PC-3 (cell line): ENCODE measurements at regions of chr18 and their contacts with region 1.

Region 1: GRCh38 chr18:68299906-68300305 is 415.0 kb downstream of the TMX3 start:
- DNase-seq: peak; percentile 90
- ATAC-seq: peak; percentile 100
- H3K4me3 ChIP-seq: no peak overlapping the region
- H3K27ac ChIP-seq: 0 out of 2 replicates have a peak overlapping the region, but pooled peaks have one; percentile 18
- H3K4me1 ChIP-seq: peaks cover 11% of the 10 kb centered on the region
- H3K27me3 ChIP-seq: no peaks in the 10 kb centered on the region
- CTCF ChIP-seq: no peak

Region 2: DNA sequence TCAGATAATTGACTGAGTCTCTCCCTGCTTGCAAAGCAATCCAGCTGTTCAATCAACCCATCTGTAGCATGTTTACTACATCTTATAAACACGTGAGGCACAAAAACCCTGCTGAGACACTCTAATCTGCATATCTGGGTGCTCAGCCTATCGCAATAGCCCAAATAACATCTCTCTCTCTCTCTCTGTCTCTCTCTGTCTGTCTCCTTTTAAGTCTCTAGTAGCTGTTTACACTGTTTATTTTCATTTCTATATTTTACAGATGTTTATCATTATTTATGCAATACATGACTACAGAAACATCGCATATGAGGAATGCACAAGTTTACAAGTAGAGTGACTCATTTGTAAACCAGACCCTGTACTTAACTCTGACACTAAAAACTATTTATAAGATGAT is 361.2 kb before region 1 on chr18:
- CTCF ChIA-PET with region 1: no interaction called
- POLR2A ChIA-PET with region 1: no interaction called
- intact Hi-C with region 1: no loop called
- DNase-seq: peak; percentile 15
- ATAC-seq: peak; percentile 57
- H3K4me3 ChIP-seq: no peak overlapping the region
- H3K27ac ChIP-seq: no peak overlapping the region
- H3K4me1 ChIP-seq: peaks cover 10% of the 10 kb centered on the region; the same call in 1 of the 2 replicates
- H3K27me3 ChIP-seq: no peaks in the 10 kb centered on the region
- CTCF ChIP-seq: no peak

Region 3: GRCh38 chr18:68233018-68233417 is 66.9 kb before region 1 on chr18:
- CTCF ChIA-PET with region 1: no interaction called
- POLR2A ChIA-PET with region 1: no interaction called
- intact Hi-C with region 1: no loop called
- DNase-seq: no peak
- ATAC-seq: no peak
- H3K4me3 ChIP-seq: no peak overlapping the region
- H3K27ac ChIP-seq: no peak overlapping the region
- H3K4me1 ChIP-seq: peaks cover 16% of the 10 kb centered on the region; the same call in 1 of the 2 replicates
- H3K27me3 ChIP-seq: no peaks in the 10 kb centered on the region
- CTCF ChIP-seq: no peak

Region 4: DNA sequence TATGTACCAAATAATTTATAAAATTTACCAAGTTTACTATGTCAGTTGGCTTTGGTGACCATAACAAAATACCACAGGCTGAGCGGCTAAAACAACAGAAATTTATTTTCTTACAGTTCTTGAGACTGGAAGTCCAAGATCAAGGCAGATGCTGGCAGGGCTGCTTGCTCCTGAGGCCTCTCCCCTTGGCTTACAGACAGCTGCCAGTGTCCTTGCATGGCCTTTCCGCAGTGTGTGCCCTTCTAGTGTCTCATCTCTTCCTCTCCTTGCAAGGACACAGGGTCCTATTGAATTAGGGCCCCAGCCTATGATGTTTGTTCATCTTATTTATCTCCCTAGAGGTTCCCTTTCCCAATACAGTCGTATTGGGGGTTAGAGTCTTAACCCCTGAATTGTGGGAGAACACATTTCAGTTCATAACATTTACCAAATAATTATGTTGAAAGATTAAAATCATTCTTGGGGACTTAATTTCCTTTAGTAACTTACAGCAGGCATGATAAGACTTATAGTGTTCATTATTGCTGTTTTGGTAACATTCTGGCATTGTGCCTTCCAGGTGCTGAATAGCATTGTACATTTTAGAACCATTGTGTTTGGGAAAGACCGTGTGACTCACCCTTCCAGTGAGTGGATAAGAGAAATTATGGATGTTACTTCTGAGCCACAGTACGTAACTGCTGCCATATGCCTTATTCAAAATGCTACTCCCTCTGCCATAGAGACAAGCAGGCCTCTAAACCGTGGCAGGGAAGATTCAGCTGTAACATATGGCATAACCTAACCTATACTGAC is 97.5 kb after region 1 on chr18:
- CTCF ChIA-PET with region 1: no interaction called
- POLR2A ChIA-PET with region 1: no interaction called
- intact Hi-C with region 1: no loop called
- DNase-seq: peak; percentile 60
- ATAC-seq: no peak
- H3K4me3 ChIP-seq: no peak overlapping the region
- H3K27ac ChIP-seq: no peak overlapping the region
- H3K4me1 ChIP-seq: peaks cover 10% of the 10 kb centered on the region; the same call in 1 of the 2 replicates
- H3K27me3 ChIP-seq: no peaks in the 10 kb centered on the region
- CTCF ChIP-seq: no peak

Region 5: GRCh38 chr18:68623342-68623741 is 323.4 kb after region 1 on chr18:
- CTCF ChIA-PET with region 1: no interaction called
- POLR2A ChIA-PET with region 1: no interaction called
- intact Hi-C with region 1: loop called (anchors 10 kb)
- DNase-seq: peak; percentile 78
- ATAC-seq: peak; percentile 57
- H3K4me3 ChIP-seq: no peak overlapping the region
- H3K27ac ChIP-seq: no peak overlapping the region
- H3K4me1 ChIP-seq: no peaks in the 10 kb centered on the region
- H3K27me3 ChIP-seq: no peaks in the 10 kb centered on the region
- CTCF ChIP-seq: peak; percentile 88